Right lobe of liver (tissue), 6 donors: ENCODE measurements at regions of chr5 and their contacts with region 1.

Region 1: DNA sequence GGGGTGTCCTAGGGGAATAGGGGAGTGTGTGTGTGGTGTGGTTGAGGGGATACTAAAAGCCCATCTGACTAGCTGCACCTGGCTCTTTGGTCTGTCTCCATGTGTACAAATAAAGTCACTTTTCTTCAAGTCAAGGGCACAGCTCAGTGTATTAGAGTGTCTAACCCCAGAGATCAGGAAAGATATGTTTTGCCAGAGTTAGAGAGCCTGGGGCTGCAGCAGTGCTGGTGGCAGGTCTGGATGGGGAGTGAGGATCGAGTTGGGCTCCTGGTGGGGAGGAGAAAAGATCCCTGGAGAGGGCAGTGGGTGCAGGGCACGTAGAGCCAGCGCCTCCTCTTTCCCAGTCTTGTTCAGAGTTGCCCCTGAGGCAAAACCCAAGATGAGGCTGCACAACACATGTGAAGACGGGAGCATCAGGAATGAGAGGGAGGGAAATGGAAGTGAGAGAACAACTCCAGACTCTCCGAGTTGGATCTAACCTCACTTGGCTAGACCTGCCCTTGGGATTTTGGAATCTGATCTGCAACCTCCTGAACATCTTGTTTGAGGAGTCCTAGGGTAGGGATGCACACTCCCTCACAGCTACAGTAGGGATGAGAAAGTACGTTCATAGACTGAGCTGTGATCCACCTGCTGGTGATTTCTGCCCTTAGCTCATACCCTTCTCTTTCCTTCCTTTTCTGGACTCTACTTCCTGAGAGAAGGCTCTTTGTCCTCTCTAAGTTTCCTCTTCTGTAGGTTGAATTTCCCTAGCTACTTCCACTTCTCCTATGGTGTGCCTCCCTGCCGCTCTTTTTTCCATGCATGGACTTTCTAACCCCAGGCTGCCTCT is 309.9 kb downstream of the ZSWIM6 start:
- DNase-seq: no peak
- ATAC-seq: peak in 3 of 4 donors; percentile 42 to 53 (median 44)
- H3K4me3 ChIP-seq: no peak overlapping the region
- H3K27ac ChIP-seq: no peak overlapping the region
- H3K4me1 ChIP-seq: peaks cover 0 to 5% (median 0%) of the 10 kb centered on the region in 4 donors
- H3K27me3 ChIP-seq: no peaks in the 10 kb centered on the region
- CTCF ChIP-seq: peak in 2 of 4 donors; percentile 10 to 19
- POLR2A ChIP-seq: no peak

Region 2: DNA sequence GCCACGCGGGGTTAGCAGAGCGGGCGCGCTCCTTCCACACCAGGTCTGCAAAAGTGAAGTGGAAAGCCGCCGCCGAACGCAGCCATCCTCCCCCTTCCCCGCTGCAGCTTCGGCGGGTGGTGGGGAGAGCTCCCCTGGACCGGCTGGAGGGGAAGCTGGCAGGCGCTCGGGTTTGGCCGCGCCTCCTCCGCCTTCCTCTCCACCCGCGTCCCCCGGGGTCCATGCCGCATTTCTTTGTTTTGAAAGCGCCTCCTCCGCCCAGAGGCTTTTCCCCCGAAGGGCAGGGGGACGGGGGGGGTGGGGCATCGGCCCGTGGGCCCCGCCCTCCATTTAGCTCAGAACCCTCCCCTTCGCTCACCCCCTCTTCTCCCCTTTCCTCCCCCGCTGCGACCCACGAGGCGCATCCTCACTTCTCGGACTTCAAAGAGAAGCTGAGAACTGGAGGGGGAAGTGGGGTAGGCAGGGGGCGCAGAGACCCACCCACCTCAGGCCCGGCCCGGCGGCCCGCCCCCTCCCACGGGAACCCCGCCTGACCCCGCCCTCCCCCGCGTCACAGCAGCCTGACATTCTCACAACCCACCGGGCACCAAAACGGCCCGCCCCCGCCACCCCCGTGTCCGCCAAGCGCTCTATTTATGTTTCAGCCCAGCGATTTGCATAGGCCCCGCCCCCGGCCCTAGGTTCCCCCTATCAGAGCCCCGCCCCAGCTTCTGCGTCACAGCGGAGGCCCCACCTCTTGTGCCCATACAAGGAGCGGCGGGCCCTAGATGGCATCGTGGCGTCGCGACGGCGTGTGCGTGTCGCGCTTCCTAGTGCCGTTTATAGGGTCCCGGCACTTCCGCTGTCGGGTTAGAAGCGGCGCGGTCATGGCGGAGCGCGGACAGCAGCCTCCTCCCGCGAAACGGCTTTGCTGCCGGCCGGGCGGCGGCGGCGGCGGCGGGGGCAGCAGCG is 310.3 kb before region 1 on chr5 and contains the start of gene ZSWIM6:
- intact Hi-C with region 1: loop called in 1 of 2 experiments (anchors 10 kb)
- DNase-seq: peak; percentile 100
- ATAC-seq: peak; percentile 84 to 93 (median 88)
- H3K4me3 ChIP-seq: peak within 1 kb of the TSS; percentile 91 to 98 (median 92)
- H3K27ac ChIP-seq: peak within 1 kb of the TSS; percentile 88 to 96 (median 94)
- H3K4me1 ChIP-seq: peaks cover 0 to 11% (median 4%) of the 10 kb centered on the region in 4 donors
- H3K27me3 ChIP-seq: no peaks in the 10 kb centered on the region
- CTCF ChIP-seq: no peak
- POLR2A ChIP-seq: peak; percentile 98
- total RNA-seq, gene ZSWIM6: 2.8 to 7.2 (median 4.1) TPM

Region 3: DNA sequence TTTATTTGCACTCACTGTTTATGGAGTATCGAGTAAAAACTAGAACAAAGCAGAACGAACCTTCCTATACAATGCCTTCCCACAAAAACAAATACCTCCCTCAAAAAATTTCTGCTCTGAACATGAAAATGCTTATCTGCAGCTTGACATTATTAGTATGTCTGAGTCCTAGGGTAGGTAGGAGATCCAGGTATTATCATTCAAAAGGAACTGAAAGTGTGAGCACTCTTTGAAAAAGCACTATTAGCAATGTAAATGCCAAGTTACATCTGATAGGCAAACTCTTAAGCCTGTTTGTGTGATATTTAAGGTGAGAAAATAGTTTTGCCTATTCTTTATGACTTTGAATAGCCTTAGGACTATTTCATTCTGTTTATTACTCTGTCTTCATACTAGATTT is 262.3 kb before region 1 on chr5:
- intact Hi-C with region 1: no loop called
- DNase-seq: no peak
- ATAC-seq: no peak
- H3K4me3 ChIP-seq: no peak overlapping the region
- H3K27ac ChIP-seq: no peak overlapping the region
- H3K4me1 ChIP-seq: no peaks in the 10 kb centered on the region
- H3K27me3 ChIP-seq: no peaks in the 10 kb centered on the region
- CTCF ChIP-seq: no peak
- POLR2A ChIP-seq: no peak